ENCODE measurements at regions of chr3 and their contacts with region 1.

Region 1: GRCh38 chr3:22916933-22917332 is 286.2 kb upstream of the UBE2E2 start:
- DNase-seq: no peak
- H3K4me3 Mint-ChIP-seq: no peak overlapping the region
- H3K27ac Mint-ChIP-seq: no peak overlapping the region
- H3K4me1 Mint-ChIP-seq: no peaks in the 10 kb centered on the region
- H3K27me3 Mint-ChIP-seq: peaks cover 2% of the 10 kb centered on the region

Region 2: DNA sequence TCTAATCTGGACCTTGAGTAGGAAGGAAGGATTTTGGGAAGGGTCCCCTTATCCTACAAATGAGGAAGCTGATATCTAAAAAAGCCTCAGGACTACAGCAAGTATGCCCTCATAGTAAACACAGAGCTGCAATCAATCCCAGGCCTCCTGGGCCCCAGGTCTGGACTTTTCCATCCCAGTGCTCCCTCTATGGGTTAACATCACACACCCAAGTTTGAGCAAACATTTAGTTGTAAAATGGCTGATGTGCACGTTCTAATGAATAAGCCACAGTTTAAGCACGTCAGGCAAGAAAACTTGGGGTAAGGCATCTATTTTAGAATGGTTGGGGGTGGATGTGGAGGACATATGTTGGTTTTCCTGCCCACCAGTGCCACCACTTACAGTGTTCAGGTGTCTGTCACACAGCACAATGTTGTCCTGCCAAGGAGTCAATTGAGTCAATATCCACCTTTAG is 844.5 kb after region 1 on chr3:
- CTCF ChIA-PET with region 1: no interaction called
- intact Hi-C with region 1: loop called (anchors 5 kb)
- DNase-seq: peak; percentile 27
- H3K4me3 Mint-ChIP-seq: no peak overlapping the region
- H3K27ac Mint-ChIP-seq: no peak overlapping the region
- H3K4me1 Mint-ChIP-seq: peaks cover 24% of the 10 kb centered on the region
- H3K27me3 Mint-ChIP-seq: peaks cover 5% of the 10 kb centered on the region